ENCODE measurements at regions of chr1 and their contacts with region 1.

Region 1: GRCh38 chr1:168178638-168179437 is at the start of gene TIPRL:
- DNase-seq: peak; percentile 97
- H3K4me3 Mint-ChIP-seq: no peak within 1 kb of the TSS
- H3K27ac Mint-ChIP-seq: no peak within 1 kb of the TSS
- H3K4me1 Mint-ChIP-seq: peaks cover 7% of the 10 kb centered on the region
- H3K27me3 Mint-ChIP-seq: peaks cover 2% of the 10 kb centered on the region
- total RNA-seq, gene TIPRL: 76.7 to 81.3 TPM

Region 2: GRCh38 chr1:167715157-167715999 is 463.5 kb before region 1 on chr1:
- CTCF ChIA-PET with region 1: no interaction called
- intact Hi-C with region 1: loop called (anchors 1 kb)
- DNase-seq: peak; percentile 95
- H3K4me3 Mint-ChIP-seq: peak overlapping the region; percentile 79
- H3K27ac Mint-ChIP-seq: peak overlapping the region; percentile 92
- H3K4me1 Mint-ChIP-seq: peaks cover 28% of the 10 kb centered on the region
- H3K27me3 Mint-ChIP-seq: peaks cover 5% of the 10 kb centered on the region

Region 3: GRCh38 chr1:168136709-168137514 is 41.9 kb before region 1 on chr1 and contains the start of gene GPR161:
- CTCF ChIA-PET with region 1: interaction called, 4 read pairs
- intact Hi-C with region 1: loop called (anchors 1 kb)
- DNase-seq: peak; percentile 37
- H3K4me3 Mint-ChIP-seq: peak within 1 kb of the TSS; percentile 75
- H3K27ac Mint-ChIP-seq: no peak within 1 kb of the TSS
- H3K4me1 Mint-ChIP-seq: peaks cover 39% of the 10 kb centered on the region
- H3K27me3 Mint-ChIP-seq: peaks cover 26% of the 10 kb centered on the region
- total RNA-seq, gene GPR161: 0.12 to 0.29 TPM

Region 4: DNA sequence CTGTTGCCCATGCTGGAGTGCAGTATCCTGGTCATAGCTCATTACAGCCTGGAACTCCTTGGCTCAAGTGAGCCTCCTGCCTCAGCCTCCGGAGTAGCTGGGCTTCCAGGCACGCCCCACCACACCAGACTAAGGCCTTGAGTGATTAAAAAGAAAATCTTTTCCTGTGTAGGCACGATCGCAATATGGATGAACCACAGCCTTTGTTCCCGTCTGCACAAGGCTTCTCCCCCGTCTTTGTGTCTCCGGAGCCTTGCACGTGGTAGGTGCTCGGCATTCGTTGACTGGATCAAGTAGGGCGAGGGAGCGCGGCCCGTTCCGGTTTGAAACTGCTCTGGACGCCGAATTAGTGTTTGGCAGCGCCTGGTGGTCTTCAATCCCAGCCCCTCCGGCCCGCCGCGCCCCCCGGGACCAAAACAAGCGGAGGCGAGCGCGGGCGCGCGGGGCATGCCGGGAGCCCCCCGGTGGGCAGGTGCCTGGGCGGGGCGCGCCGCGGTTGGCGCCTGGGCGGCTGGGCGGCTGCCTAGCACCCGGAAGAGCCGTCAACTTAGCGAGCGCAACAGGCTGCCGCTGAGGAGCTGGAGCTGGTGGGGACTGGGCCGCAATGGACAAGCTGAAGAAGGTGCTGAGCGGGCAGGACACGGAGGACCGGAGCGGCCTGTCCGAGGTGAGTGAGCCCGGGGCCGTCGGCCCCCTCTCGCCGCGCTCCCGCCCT is 46.8 kb after region 1 on chr1 and contains the start of gene SFT2D2:
- CTCF ChIA-PET with region 1: interaction called, 4 read pairs
- intact Hi-C with region 1: loop called (anchors 1 kb)
- DNase-seq: peak; percentile 77
- H3K4me3 Mint-ChIP-seq: peak within 1 kb of the TSS; percentile 92
- H3K27ac Mint-ChIP-seq: peak within 1 kb of the TSS; percentile 80
- H3K4me1 Mint-ChIP-seq: peaks cover 46% of the 10 kb centered on the region
- H3K27me3 Mint-ChIP-seq: peaks cover 2% of the 10 kb centered on the region
- total RNA-seq, gene SFT2D2: 33.1 to 35.3 TPM

Region 5: DNA sequence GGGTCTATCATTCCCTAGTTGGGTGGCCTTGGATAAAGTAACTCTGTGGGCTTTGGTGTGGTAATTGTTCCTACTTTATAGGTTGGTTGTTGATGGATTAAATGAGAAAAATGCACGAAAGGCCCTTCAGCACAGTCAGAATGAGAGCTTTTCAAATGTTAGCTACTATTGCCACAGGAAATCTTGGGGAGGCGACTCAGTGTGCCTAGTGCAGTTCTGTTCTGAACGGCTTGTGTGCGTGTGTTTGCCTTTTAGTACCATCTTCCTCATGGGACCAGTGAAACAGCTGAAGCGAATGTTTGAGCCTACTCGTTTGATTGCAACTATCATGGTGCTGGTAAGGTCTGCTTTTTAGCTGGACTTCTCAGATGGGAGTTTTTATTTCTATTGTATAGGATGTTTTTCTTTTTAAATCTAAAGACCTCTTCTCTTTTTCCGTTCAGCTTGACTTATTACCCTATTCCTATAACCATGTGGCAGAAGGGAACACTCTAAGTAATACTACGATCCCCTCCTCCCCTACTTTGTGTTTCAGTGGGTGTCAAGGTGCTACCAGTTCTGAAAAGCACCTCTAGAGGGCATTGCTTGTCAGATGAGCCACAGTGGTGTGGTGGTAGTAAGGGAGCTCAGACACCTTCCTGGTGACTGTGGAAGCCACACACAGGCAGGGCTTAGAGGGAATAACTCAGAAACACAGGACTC is 56.2 kb after region 1 on chr1:
- CTCF ChIA-PET with region 1: interaction called, 5 read pairs
- intact Hi-C with region 1: loop called (anchors 2 kb)
- DNase-seq: peak; percentile 53
- H3K4me3 Mint-ChIP-seq: no peak overlapping the region
- H3K27ac Mint-ChIP-seq: peak overlapping the region; percentile 48
- H3K4me1 Mint-ChIP-seq: peaks cover 41% of the 10 kb centered on the region
- H3K27me3 Mint-ChIP-seq: no peaks in the 10 kb centered on the region

Region 6: DNA sequence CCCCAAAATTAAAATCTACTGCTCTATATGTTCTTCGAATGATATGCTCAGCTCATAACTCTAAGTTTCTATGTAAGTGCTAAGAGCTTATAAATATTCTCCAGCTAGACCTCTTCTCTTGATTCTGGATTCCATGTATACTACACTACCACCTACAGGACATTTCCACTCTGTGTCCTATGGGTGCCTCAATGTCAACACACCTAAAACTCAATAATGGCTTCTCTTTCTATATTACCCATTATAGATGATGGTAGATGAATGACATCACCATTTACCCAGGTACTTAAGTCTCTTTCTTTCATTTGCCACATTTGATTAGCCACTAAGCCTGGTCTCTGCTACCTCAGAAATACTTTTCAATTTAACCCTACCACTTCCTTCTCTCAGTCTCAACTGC is 143.1 kb after region 1 on chr1:
- CTCF ChIA-PET with region 1: no interaction called
- intact Hi-C with region 1: loop called (anchors 1 kb)
- DNase-seq: no peak
- H3K4me3 Mint-ChIP-seq: no peak overlapping the region
- H3K27ac Mint-ChIP-seq: no peak overlapping the region
- H3K4me1 Mint-ChIP-seq: peaks cover 4% of the 10 kb centered on the region
- H3K27me3 Mint-ChIP-seq: no peaks in the 10 kb centered on the region

Measured in activated naive CD4-positive, alpha-beta T cell treated with anti-CD3 and anti-CD28 coated beads for 36 hours (primary cell).